Activated T-helper 2 cell treated with anti-CD3 and anti-CD28 coated beads, Interferon-gamma antibody, Interleukin-2, Interleukin-4, amounts not matched to agents 10 μg/mL and 5 μg/mL and 100 μg/mL, durations not matched to agents 14 hours and 24 hours and 36 hours (primary cell): ENCODE measurements at regions of chr6 and their contacts with region 1.

Region 1: DNA sequence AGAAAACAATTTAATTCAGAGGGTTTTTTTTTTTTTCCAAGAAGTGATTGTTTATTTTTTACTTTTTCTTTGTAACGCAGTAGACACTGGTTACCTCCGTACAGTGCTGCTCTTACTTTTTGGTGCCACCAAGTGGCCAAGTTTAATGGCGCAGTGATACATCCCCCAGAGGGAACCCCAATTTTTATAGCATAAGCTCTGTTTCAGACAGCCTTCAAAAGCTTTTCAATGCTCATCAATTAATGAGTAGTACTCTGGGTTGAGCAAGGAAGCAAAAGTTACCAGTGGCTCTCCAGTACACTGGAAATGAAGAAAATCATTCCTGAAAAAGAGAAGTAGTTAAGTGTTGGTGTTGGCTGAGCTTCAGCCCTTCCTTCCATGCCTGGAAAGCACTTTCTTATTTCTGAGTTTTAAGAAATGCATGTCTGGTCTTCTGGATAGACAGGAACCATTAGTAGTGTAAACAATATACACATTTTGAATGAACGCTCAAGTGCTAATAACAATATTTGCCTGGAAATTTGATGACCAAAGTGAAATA is 129.1 kb upstream of the SMLR1 start:
- DNase-seq: peak; percentile 51
- H3K4me3 Mint-ChIP-seq: no peak overlapping the region
- H3K27ac Mint-ChIP-seq: peak overlapping the region; percentile 29
- H3K4me1 Mint-ChIP-seq: peaks cover 18% of the 10 kb centered on the region
- H3K27me3 Mint-ChIP-seq: no peaks in the 10 kb centered on the region

Region 2: DNA sequence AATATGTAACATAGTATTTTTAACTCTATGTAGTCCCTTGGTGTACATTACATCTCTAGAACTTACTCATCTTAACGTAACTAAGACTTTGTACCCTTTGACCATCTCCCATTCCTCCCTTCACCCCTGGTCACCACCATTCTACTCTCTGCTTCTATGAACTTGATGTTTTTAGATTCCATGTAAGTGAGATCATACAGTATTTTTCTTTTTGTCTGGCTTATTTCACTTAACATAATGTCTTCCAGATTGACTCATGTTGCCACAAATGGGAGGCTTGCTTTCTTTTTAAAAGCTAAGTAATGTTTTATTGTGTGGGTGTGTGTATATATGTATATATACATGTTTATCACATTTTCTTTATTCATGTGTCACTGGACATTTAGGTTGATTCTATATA is 276.5 kb before region 1 on chr6:
- intact Hi-C with region 1: no loop called
- DNase-seq: no peak
- H3K4me3 Mint-ChIP-seq: no peak overlapping the region
- H3K27ac Mint-ChIP-seq: no peak overlapping the region
- H3K4me1 Mint-ChIP-seq: peaks cover 3% of the 10 kb centered on the region
- H3K27me3 Mint-ChIP-seq: peaks cover 6% of the 10 kb centered on the region

Region 3: DNA sequence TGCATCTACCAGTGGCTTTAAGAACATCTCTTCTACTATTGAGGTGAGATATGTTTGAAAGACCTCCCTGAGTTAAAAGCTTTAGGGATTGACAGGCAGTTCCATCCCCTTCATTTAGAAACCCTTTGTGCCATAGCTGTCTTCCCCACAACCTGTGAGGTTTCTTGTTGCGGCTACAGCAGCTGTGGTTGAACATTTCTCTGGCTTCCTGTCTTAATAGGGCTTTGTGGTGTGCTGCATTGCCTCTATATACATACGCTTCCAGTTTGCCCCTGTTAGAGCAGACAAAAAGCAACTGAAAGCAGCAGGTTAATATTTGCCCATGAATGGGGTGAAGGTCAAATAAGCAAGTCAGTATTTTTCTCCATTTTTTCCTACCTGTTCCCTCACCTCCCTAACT is 122.1 kb before region 1 on chr6:
- intact Hi-C with region 1: loop called (anchors 10 kb)
- DNase-seq: peak; percentile 73
- H3K4me3 Mint-ChIP-seq: peak overlapping the region; percentile 44
- H3K27ac Mint-ChIP-seq: peak overlapping the region; percentile 61
- H3K4me1 Mint-ChIP-seq: peaks cover 40% of the 10 kb centered on the region
- H3K27me3 Mint-ChIP-seq: no peaks in the 10 kb centered on the region